Dorsolateral prefrontal cortex (tissue), 120 donors: ENCODE measurements at regions of chr12 and their contacts with region 1.

Region 1: DNA sequence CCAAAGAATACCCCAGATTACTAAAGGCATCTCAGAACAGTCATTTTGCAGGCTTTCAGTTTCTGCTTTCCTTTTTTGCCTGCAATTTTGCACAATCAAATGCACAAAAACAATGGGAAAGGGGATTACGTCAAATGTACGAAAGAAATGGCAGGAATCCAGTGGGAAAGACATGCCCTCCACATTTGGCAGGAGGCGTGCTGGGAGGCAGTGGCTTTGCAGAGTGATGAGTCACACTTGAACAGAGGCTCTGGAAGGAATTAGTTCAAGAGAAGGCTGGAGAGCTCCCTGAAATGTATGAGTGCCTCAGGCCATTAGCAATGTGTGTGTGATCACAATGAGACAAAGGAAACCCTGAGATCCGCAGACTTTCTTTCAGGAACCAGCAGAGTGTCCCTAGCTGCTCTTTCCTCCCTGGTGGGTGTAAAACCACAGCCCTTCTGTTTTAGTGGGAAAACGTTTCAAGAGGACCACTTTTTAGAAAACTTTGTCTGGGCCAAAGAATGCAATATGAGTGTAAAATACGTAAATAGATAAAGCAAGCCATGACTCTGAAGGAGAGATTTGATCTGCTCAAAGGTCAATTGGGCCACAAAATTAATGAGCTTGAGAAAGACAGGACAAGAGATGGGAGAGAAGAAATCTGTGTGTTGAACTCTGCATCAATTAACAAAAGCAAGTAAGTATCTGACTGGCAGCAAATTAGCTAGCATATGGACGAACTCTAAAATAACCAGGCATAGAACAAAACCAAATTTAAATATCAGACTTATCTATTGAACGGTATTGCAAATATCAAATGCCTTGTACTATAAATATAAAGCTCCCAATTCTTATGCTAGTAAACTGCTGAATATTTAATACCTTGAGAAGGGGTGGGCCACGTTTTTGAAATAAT is 155.4 kb upstream of the PDE3A start:
- DNase-seq: peak in 9 of 10 donors; percentile 27 to 77 (median 63)
- H3K4me3 ChIP-seq: peak overlapping the region in 53 of 59 donors; percentile 1 to 59 (median 31)
- H3K27ac ChIP-seq: peak overlapping the region in 54 of 59 donors; percentile 1 to 85 (median 68)
- H3K27me3 ChIP-seq: no peaks in the 10 kb centered on the region
- CTCF ChIP-seq: peak in 4 of 56 donors; percentile 7 to 24 (median 10)

Region 2: DNA sequence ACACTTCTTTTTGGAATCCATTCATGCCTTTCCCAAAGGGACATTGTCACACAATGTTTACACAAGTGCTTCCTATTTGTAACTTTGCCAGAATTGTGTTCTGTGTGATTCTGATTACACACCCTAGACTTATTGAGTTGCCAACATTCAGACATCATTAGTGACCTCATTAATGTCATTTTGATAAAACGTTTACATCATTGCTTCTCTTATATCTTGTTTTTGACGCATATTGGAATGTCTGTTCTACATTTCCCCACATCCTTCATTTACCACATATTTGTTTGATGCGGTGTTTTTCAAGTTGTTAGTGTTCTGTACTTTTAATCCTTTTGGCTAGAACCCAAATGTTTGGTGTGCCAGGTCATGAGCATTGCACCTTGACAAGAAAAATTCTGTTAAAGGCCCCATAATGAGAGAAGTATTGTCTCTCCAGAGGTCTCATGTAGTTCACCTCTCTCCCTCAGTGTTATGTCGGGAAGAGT is 468.1 kb before region 1 on chr12:
- intact Hi-C with region 1: loop called in 1 of 2 experiments (anchors 10 kb)
- DNase-seq: no peak
- H3K4me3 ChIP-seq: no peak overlapping the region
- H3K27ac ChIP-seq: peak overlapping the region in 1 of 59 donors; percentile 11
- H3K27me3 ChIP-seq: no peaks in the 10 kb centered on the region
- CTCF ChIP-seq: no peak

Region 3: DNA sequence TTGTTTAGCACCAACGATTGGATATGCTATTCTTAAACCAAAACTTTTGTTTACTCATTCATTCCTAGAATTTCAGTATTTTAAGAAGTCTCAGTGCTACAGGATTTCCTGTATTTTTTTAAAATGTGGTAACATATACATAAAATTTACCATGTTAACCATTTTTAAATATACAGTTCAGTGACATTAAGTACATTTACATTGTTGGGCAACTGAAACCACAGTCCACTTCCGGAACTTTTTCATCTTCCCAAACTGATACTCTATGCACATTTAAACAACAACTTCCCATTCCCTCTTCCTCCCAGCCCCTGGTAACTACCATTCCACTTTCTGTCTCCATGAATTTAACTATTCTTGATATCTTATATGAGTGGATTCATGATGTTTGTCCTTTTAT is 185.8 kb after region 1 on chr12:
- intact Hi-C with region 1: no loop called
- DNase-seq: no peak
- H3K4me3 ChIP-seq: no peak overlapping the region
- H3K27ac ChIP-seq: no peak overlapping the region
- H3K27me3 ChIP-seq: no peaks in the 10 kb centered on the region
- CTCF ChIP-seq: no peak

Region 4: GRCh38 chr12:20549107-20549719 is 336.3 kb after region 1 on chr12:
- intact Hi-C with region 1: no loop called
- DNase-seq: peak in 2 of 10 donors; percentile 32 to 36
- H3K4me3 ChIP-seq: no peak overlapping the region
- H3K27ac ChIP-seq: no peak overlapping the region
- H3K27me3 ChIP-seq: no peaks in the 10 kb centered on the region
- CTCF ChIP-seq: peak in 55 of 56 donors; percentile 20 to 66 (median 48)